Activated naive CD4-positive, alpha-beta T cell treated with anti-CD3 and anti-CD28 coated beads, Interleukin-2, amount 10 ng/mL, durations not matched to agents 7 days and 5 days (primary cell): ENCODE measurements at regions of chr5 and their contacts with region 1.

Region 1: DNA sequence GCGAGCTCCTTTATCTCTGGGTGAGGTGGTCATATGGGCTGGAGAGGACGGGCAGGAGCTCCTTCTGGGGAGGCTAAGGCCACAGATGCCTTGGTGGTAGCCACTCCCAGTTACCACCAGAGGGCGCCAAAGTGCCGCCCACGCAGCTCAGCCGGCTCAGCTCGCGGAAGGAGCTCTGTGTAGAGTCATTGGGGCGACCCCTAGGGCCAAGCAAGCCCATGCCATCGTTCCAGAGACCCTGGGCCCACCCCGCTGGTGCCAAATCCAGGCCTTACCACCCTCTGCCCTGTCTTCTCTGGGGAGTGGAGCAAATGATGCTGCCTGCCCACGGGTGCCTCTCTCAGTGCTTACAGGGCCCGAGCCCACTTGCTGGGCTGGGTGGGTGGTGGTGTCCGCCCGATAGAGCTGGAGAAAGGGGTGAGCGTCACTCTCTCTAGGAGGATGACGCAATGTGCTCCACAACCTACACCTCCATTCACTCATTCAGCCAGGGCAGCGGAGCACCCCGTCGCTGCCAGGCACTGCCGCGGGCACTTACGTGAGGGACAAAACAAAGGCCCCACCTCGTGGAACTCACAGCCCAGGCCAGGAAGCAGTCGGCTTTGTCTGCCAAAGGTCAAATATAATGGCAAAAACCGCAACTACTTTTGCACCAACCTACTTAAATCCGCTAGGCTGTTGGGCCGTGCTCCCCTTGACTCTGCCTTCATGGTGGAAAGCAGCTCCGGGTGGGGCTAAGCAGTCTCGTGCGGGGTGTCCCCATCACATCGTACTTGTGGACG is 13.8 kb downstream of the TSPAN17 start:
- DNase-seq: peak; percentile 83
- H3K4me3 Mint-ChIP-seq: no peak overlapping the region
- H3K27ac Mint-ChIP-seq: no peak overlapping the region
- H3K4me1 Mint-ChIP-seq: peaks cover 33% of the 10 kb centered on the region
- H3K27me3 Mint-ChIP-seq: peaks cover 36% of the 10 kb centered on the region

Region 2: DNA sequence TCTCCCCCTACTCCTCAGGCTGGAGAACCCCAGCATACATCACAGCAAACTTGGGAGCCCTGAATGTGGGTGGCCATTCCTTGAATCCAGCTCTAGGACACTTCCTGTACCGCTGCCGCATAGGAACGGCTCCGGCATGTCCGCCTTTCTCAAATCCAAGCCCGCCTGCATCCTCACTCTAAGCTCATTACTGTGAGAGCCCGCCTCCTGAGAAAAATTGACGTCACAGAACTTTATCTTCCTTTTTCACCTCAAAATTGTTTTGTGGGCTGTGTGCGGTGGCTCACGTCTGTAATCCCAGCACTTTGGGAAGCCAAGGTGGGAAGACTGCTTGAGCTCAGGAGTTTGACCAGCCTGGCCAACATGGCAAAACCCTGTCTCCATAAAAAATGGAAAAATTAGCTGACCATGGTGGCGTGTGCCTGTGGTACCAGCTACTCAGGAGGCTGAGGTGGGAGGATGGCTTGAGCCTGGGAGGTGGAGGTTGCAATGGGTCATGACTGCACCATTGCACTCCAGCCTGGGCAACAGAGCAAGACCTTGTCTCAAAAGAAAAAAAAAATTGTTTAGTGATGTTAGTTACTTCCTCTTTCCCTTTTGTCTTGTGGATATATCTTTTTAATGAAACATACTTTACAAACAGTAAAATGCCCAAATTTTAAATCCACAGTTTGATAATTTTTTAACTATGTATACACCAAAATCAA is 146.7 kb before region 1 on chr5:
- CTCF ChIA-PET with region 1: no interaction called
- DNase-seq: no peak
- H3K4me3 Mint-ChIP-seq: no peak overlapping the region
- H3K27ac Mint-ChIP-seq: no peak overlapping the region
- H3K4me1 Mint-ChIP-seq: peaks cover 6% of the 10 kb centered on the region
- H3K27me3 Mint-ChIP-seq: no peaks in the 10 kb centered on the region

Region 3: GRCh38 chr5:176647030-176647866 is 13.8 kb before region 1 on chr5 and contains the start of gene TSPAN17:
- CTCF ChIA-PET with region 1: interaction called, 22 read pairs
- DNase-seq: peak; percentile 100
- H3K4me3 Mint-ChIP-seq: peak within 1 kb of the TSS; percentile 88
- H3K27ac Mint-ChIP-seq: peak within 1 kb of the TSS; percentile 90
- H3K4me1 Mint-ChIP-seq: peaks cover 54% of the 10 kb centered on the region
- H3K27me3 Mint-ChIP-seq: peaks cover 10% of the 10 kb centered on the region

Region 4: DNA sequence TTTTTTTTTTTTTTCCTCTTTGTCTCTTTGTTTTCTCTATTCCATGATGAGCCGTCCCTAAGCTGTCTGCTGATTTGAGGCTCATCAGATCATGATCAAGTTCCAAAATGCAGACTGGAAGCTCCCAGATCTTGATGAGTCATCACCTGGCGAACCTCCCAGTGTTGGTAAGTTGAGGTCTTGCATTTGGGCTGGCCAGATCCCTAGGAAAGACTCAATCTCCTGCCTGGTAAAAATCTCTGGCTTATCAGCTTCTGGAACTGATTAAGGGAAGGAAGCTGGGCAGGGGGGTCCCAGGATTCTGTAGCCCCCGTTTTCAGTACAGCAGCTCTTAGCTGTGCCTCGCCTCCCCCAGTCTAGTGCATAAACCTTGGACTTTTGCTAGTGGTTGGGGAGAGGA is 55.3 kb after region 1 on chr5:
- CTCF ChIA-PET with region 1: no interaction called
- DNase-seq: no peak
- H3K4me3 Mint-ChIP-seq: no peak overlapping the region
- H3K27ac Mint-ChIP-seq: no peak overlapping the region
- H3K4me1 Mint-ChIP-seq: no peaks in the 10 kb centered on the region
- H3K27me3 Mint-ChIP-seq: peaks cover 96% of the 10 kb centered on the region

Region 5: DNA sequence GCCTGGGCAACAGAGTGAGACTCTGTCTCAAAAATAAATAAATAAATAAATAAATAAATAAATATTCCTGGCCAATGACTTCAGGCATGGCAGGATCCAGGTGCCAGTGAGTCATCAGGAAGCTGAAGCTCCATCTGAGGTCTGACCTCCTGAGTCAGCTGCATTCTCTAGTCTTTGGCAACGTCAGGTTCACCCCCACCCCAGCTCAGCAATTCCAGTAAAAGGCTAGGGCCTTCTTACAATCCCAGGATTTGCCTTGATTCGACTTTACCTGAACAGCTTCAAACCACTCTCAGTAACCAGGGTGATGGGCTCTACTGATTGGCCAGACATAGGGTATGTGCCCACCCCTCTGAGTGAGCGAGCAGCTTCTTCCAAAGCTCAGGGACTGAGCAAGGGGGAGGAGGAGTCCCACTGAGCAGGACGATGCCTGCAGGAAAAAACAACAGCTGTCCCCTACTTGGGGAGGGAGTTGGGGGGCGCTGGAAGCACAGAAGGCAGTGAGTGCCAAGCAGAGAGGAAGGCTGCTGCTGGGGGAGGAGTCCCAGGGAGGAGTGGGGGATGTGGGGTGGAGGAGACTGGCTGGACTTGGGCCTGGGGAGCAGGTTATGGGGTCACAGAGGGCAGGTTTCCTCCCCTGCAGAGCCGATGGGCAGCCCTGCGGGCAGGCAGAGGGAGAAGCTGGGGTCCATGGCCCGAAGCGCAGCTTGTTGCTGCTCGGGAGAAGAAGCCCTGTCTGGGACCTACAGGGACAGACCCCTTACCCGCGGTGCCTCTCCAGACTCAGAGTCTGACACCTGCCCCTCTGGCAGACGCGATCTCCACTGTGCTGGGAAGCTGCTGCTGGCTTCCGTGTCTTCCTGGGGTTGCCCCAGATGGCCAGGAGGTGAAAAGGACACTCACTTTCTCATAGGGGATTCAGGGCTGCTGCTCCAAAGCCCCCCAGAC is 123.4 kb after region 1 on chr5:
- CTCF ChIA-PET with region 1: interaction called, 13 read pairs
- DNase-seq: no peak
- H3K4me3 Mint-ChIP-seq: no peak overlapping the region
- H3K27ac Mint-ChIP-seq: no peak overlapping the region
- H3K4me1 Mint-ChIP-seq: peaks cover 4% of the 10 kb centered on the region
- H3K27me3 Mint-ChIP-seq: peaks cover 72% of the 10 kb centered on the region

Region 6: DNA sequence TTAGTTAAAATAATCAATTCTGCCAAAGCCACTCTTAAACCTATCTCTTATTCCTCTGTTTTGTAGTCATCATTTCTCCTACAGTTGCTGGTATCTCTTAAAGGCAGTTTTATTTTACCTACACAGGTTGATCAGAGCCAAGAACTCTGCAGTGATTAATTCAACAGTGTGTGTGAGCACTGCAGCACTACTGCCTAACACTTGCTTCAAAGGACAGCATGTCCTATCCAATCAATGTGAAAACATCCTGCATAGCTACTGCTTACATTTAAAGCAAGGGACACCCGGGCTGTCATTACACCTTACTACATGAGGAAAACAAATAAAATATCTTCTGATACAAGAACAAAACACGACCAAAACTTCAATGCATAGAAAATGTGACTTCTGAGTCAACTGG is 283.2 kb after region 1 on chr5:
- CTCF ChIA-PET with region 1: interaction called, 13 read pairs
- DNase-seq: no peak
- H3K4me3 Mint-ChIP-seq: no peak overlapping the region
- H3K27ac Mint-ChIP-seq: no peak overlapping the region
- H3K4me1 Mint-ChIP-seq: no peaks in the 10 kb centered on the region
- H3K27me3 Mint-ChIP-seq: no peaks in the 10 kb centered on the region